Caco-2 (cell line): ENCODE measurements at regions of chr5 and their contacts with region 1.

Region 1: GRCh38 chr5:157026789-157027424 is 32.0 kb downstream of the HAVCR1 start:
- DNase-seq: peak; percentile 56 to 65
- H3K4me3 ChIP-seq: no peak overlapping the region
- H3K4me3 Mint-ChIP-seq: no peak overlapping the region
- H3K27ac Mint-ChIP-seq: no peak overlapping the region
- H3K4me1 ChIP-seq: peaks cover 17% of the 10 kb centered on the region
- H3K4me1 Mint-ChIP-seq: no peaks in the 10 kb centered on the region
- H3K27me3 ChIP-seq: no peaks in the 10 kb centered on the region
- H3K27me3 Mint-ChIP-seq: no peaks in the 10 kb centered on the region
- CTCF ChIP-seq: peak; percentile 85 to 86

Region 2: DNA sequence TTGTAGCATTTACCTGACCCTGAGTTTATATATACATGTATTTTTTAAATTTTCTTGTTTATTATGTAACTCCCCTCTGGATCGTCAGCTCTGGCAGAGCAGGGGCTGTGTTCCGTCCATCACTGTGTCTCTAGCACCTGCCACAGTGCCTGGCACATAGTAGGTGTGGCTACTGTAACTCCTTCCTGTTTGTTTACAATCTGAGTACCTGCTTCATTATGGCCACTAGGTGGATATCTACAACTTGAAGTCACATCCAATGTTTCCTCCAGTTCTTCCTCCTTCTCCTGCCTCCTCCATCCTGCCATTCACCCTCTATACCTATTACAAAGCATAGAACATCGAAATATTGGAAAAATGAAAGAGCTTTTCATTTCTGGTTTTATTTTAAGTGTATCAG is 191.0 kb before region 1 on chr5:
- CTCF ChIA-PET with region 1: no interaction called
- POLR2A ChIA-PET with region 1: no interaction called
- intact Hi-C with region 1: loop called (anchors 1 kb)
- DNase-seq: peak in 1 of 2 experiments; percentile 29
- H3K4me3 ChIP-seq: no peak overlapping the region
- H3K4me3 Mint-ChIP-seq: no peak overlapping the region
- H3K27ac Mint-ChIP-seq: no peak overlapping the region
- H3K4me1 ChIP-seq: no peaks in the 10 kb centered on the region
- H3K4me1 Mint-ChIP-seq: peaks cover 10% of the 10 kb centered on the region
- H3K27me3 ChIP-seq: no peaks in the 10 kb centered on the region
- H3K27me3 Mint-ChIP-seq: peaks cover 4% of the 10 kb centered on the region
- CTCF ChIP-seq: peak; percentile 42 to 62

Region 3: DNA sequence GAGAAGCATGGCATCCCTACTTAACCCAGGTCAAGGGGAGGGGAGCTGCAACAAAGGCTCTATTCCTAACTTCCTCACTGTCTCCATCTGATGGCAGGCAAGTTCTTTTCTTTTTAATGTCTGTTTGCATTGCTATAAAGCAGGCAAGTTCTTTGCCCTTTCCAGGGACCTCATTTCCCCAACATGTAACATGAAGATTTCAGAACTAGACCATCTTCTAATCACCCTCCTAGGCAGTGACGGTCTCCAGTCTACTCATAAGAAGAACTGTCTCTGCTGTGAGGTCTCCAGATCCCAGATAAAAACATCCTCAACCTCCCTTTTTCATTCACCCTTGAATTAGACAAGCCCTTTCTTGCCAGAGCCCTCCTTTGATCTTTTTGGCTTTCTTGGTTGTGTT is 134.7 kb before region 1 on chr5:
- CTCF ChIA-PET with region 1: no interaction called
- POLR2A ChIA-PET with region 1: no interaction called
- intact Hi-C with region 1: loop called (anchors 1 kb)
- DNase-seq: peak in 1 of 2 experiments; percentile 7
- H3K4me3 ChIP-seq: no peak overlapping the region
- H3K4me3 Mint-ChIP-seq: no peak overlapping the region
- H3K27ac Mint-ChIP-seq: no peak overlapping the region
- H3K4me1 ChIP-seq: no peaks in the 10 kb centered on the region
- H3K4me1 Mint-ChIP-seq: peaks cover 11% of the 10 kb centered on the region
- H3K27me3 ChIP-seq: no peaks in the 10 kb centered on the region
- H3K27me3 Mint-ChIP-seq: peaks cover 5% of the 10 kb centered on the region
- CTCF ChIP-seq: no peak

Region 4: GRCh38 chr5:156963125-156963524 is 63.8 kb before region 1 on chr5 and contains the start of gene TIMD4:
- CTCF ChIA-PET with region 1: no interaction called
- POLR2A ChIA-PET with region 1: no interaction called
- intact Hi-C with region 1: no loop called
- DNase-seq: no peak
- H3K4me3 ChIP-seq: no peak within 1 kb of the TSS
- H3K4me3 Mint-ChIP-seq: no peak within 1 kb of the TSS
- H3K27ac Mint-ChIP-seq: no peak within 1 kb of the TSS
- H3K4me1 ChIP-seq: no peaks in the 10 kb centered on the region
- H3K4me1 Mint-ChIP-seq: no peaks in the 10 kb centered on the region
- H3K27me3 ChIP-seq: no peaks in the 10 kb centered on the region
- H3K27me3 Mint-ChIP-seq: no peaks in the 10 kb centered on the region
- CTCF ChIP-seq: no peak
- total RNA-seq, gene TIMD4: 1.7 and 2.0 TPM in 2 replicates